Ovary (tissue), 10 donors: ENCODE measurements at regions of chr9 and their contacts with region 1.

Region 1: DNA sequence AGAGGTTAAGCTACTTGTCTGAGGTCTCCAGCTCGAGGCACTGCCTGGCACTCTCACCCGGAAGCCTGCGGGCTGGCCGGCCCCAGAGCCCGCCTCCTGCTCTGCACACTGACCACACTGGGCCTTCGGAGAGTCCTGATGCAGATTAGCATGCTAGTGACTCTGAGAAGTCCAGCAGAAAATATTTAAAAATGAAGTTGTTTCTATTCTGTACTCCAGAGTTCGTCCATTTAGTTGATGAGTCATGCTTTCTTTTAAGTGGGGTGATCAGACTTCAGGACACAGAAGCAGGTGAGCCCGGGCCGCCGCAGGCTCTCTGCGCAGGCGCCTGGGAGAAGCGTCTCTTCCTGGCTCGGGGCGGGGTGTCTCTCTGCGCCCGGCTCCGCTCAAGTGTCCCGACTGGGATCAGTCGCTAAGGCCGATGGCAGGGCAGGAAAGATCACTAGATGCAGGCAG is 32.5 kb downstream of the FAM240B start:
- DNase-seq: peak in 3 of 5 donors; percentile 20 to 42 (median 21)
- H3K4me3 ChIP-seq: no peak overlapping the region
- H3K27ac ChIP-seq: no peak overlapping the region
- H3K4me1 ChIP-seq: peaks cover 8% of the 10 kb centered on the region
- H3K27me3 ChIP-seq: no peaks in the 10 kb centered on the region
- CTCF ChIP-seq: no peak
- EP300 ChIP-seq: no peak
- POLR2A ChIP-seq: no peak

Region 2: GRCh38 chr9:38732885-38733284 is 45.5 kb after region 1 on chr9:
- intact Hi-C with region 1: loop called in 1 of 4 experiments (anchors 10 kb)
- DNase-seq: no peak
- H3K4me3 ChIP-seq: no peak overlapping the region
- H3K27ac ChIP-seq: no peak overlapping the region
- H3K4me1 ChIP-seq: no peaks in the 10 kb centered on the region
- H3K27me3 ChIP-seq: no peaks in the 10 kb centered on the region
- CTCF ChIP-seq: no peak
- EP300 ChIP-seq: no peak
- POLR2A ChIP-seq: no peak